Activated CD4-positive, alpha-beta memory T cell treated with anti-CD3 and anti-CD28 coated beads for 36 hours (primary cell): ENCODE measurements at regions of chr6 and their contacts with region 1.

Region 1: GRCh38 chr6:133973109-133973971 is 20.3 kb downstream of the TBPL1 start:
- DNase-seq: no peak
- H3K4me3 Mint-ChIP-seq: no peak overlapping the region
- H3K27ac Mint-ChIP-seq: no peak overlapping the region
- H3K4me1 Mint-ChIP-seq: peaks cover 30% of the 10 kb centered on the region
- H3K27me3 Mint-ChIP-seq: no peaks in the 10 kb centered on the region

Region 2: GRCh38 chr6:133952815-133953633 is 20.3 kb before region 1 on chr6 and contains the start of gene TBPL1:
- CTCF ChIA-PET with region 1: interaction called, 35 read pairs
- POLR2A ChIA-PET with region 1: no interaction called
- intact Hi-C with region 1: loop called (anchors 2 kb)
- DNase-seq: peak; percentile 93
- H3K4me3 Mint-ChIP-seq: peak within 1 kb of the TSS; percentile 93
- H3K27ac Mint-ChIP-seq: peak within 1 kb of the TSS; percentile 89
- H3K4me1 Mint-ChIP-seq: peaks cover 37% of the 10 kb centered on the region
- H3K27me3 Mint-ChIP-seq: no peaks in the 10 kb centered on the region
- total RNA-seq, gene TBPL1: 31.3 to 35.7 TPM

Region 3: GRCh38 chr6:133991096-133991593 is 17.8 kb after region 1 on chr6:
- CTCF ChIA-PET with region 1: interaction called, 12 read pairs
- POLR2A ChIA-PET with region 1: no interaction called
- intact Hi-C with region 1: no loop called
- DNase-seq: no peak
- H3K4me3 Mint-ChIP-seq: no peak overlapping the region
- H3K27ac Mint-ChIP-seq: no peak overlapping the region
- H3K4me1 Mint-ChIP-seq: peaks cover 8% of the 10 kb centered on the region
- H3K27me3 Mint-ChIP-seq: no peaks in the 10 kb centered on the region

Region 4: DNA sequence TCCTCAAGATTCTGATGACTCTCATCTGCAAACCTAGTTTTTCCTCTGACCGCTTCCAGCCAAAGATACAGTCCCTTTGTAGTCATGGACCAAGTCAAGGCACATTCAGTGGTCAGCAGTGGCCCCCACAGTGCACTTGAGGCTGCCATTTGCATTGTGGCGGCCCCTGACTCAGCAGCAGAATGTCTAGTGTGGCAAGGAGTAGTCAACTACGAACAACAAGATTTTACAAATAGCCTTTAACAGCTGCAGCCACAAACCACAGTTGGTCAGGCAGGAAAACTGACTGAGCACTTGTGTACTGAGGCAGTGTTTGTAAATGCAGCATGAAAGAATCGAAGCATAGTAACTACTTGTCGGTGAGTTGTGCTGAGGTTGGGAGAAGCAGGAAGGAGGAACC is 29.5 kb after region 1 on chr6:
- CTCF ChIA-PET with region 1: interaction called, 12 read pairs
- POLR2A ChIA-PET with region 1: no interaction called
- intact Hi-C with region 1: no loop called
- DNase-seq: no peak
- H3K4me3 Mint-ChIP-seq: no peak overlapping the region
- H3K27ac Mint-ChIP-seq: no peak overlapping the region
- H3K4me1 Mint-ChIP-seq: no peaks in the 10 kb centered on the region
- H3K27me3 Mint-ChIP-seq: peaks cover 21% of the 10 kb centered on the region

Region 5: DNA sequence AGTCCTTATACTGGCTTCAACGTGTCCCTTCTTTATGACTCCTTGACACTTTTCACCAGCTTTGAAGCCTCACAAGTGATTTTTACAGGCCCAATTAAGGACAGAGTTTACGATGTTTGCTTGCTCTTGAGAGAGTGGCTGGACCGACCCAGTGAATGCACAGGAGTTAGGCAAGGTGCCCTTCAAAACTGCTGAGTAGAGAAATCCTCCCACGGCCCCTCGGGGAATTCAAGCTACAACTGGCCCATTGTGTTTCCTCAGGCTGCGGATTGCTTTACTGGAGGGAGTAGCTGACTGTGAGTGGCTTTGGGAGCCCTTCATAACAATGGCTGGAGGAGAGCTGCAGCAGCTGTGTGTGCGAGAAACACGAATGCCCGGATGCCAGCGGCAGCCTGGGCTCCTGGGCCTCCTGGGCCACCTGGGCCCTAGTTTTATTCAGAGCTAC is 294.6 kb after region 1 on chr6:
- CTCF ChIA-PET with region 1: no interaction called
- POLR2A ChIA-PET with region 1: no interaction called
- intact Hi-C with region 1: no loop called
- DNase-seq: no peak
- H3K4me3 Mint-ChIP-seq: no peak overlapping the region
- H3K27ac Mint-ChIP-seq: no peak overlapping the region
- H3K4me1 Mint-ChIP-seq: peaks cover 11% of the 10 kb centered on the region
- H3K27me3 Mint-ChIP-seq: no peaks in the 10 kb centered on the region